ENCODE measurements at regions of chr3 and their contacts with region 1.

Region 1: GRCh38 chr3:195863121-195864006 is 45.0 kb downstream of the TNK2 start:
- DNase-seq: peak; percentile 72
- ATAC-seq: peak; percentile 72
- H3K4me3 Mint-ChIP-seq: no peak overlapping the region
- H3K27ac Mint-ChIP-seq: no peak overlapping the region
- H3K4me1 Mint-ChIP-seq: peaks cover 4% of the 10 kb centered on the region
- H3K27me3 Mint-ChIP-seq: no peaks in the 10 kb centered on the region

Region 2: GRCh38 chr3:195921334-195921791 is 58.0 kb after region 1 on chr3:
- CTCF ChIA-PET with region 1: interaction called, 82 read pairs
- DNase-seq: no peak
- ATAC-seq: no peak
- H3K4me3 Mint-ChIP-seq: no peak overlapping the region
- H3K27ac Mint-ChIP-seq: no peak overlapping the region
- H3K4me1 Mint-ChIP-seq: no peaks in the 10 kb centered on the region
- H3K27me3 Mint-ChIP-seq: peaks cover 4% of the 10 kb centered on the region

Measured in activated CD8-positive, alpha-beta memory T cell treated with anti-CD3 and anti-CD28 coated beads, Interleukin-2, amount 10 ng/mL, durations not matched to agents 7 days and 5 days (primary cell).